ENCODE measurements at regions of chr1 and their contacts with region 1.

Region 1: GRCh38 chr1:153985941-153986761 is at the start of gene RAB13:
- DNase-seq: peak; percentile 86
- H3K4me3 Mint-ChIP-seq: peak within 1 kb of the TSS; percentile 84
- H3K27ac Mint-ChIP-seq: peak within 1 kb of the TSS; percentile 67
- H3K4me1 Mint-ChIP-seq: peaks cover 48% of the 10 kb centered on the region
- H3K27me3 Mint-ChIP-seq: peaks cover 12% of the 10 kb centered on the region
- CTCF ChIP-seq: no peak
- total RNA-seq, gene RAB13: 87.5 and 95.0 TPM in 2 replicates

Region 2: DNA sequence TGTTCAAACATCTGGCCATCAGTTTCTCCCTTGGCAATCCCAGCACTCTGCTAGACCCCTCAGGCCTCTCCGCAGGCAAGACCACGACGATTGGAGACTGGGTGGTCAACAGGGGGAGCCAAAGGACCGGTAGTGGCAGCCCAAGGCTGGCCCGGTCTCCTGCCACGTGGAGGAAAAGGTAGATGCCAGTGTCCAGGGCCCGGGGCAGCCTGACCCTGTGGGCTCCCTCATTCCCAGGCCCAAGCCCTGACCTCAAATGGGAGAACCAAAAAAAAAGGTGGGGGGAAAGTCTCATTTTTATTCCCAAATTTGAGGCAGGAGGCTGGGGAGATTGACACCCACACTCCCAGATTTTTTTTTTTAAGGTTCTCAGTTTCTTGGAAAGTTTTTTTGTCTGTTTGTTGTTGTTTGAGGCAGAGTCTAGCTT is 475.2 kb before region 1 on chr1:
- CTCF ChIA-PET with region 1: no interaction called
- intact Hi-C with region 1: loop called (anchors 10 kb)
- DNase-seq: peak; percentile 97
- H3K4me3 Mint-ChIP-seq: no peak overlapping the region
- H3K27ac Mint-ChIP-seq: peak overlapping the region; percentile 82
- H3K4me1 Mint-ChIP-seq: peaks cover 82% of the 10 kb centered on the region
- H3K27me3 Mint-ChIP-seq: no peaks in the 10 kb centered on the region
- CTCF ChIP-seq: peak; percentile 97

Region 3: DNA sequence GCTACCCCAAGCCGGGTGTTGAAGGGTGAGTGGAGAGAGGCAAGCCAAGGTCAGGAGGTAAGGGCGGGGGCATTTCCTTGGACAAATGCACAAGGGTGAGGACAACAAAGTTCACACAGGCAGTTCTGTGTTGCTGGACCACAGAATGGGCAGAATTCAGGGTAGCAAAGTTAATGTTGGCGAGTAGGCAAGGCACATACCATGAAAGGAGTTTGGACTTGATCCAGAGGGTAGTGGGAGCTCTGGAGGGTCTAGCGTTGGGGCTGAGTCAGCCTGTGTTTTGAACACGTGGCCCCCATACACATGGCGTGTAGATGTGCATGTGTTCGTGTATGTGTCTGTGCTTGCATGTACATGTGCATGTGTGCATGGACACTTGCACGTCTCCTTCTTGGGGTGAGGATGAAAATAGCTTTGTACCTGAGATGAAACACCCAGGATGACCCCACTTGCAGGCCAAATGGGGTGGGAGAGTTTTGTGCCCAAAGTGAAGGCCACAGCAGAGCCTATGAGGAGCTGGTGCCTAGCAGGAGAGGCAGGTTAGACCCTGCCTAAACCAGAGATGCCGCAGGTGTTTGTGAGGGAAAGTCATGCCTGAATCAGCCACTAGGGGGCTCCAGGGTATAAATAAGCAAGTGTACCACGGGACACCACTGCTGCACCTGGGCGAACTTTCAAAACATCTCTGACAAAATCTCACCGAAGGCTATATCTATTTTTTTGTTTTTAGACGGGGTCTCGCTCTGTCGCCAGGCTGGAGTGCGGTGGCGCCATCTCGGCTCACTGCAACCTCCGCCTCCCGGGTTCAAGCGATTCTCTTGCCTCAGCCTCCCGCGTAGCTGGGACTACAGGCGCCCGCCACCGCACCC is 189.1 kb before region 1 on chr1:
- CTCF ChIA-PET with region 1: interaction called, 4 read pairs
- intact Hi-C with region 1: loop called (anchors 1 kb)
- DNase-seq: peak; percentile 88
- H3K4me3 Mint-ChIP-seq: no peak overlapping the region
- H3K27ac Mint-ChIP-seq: no peak overlapping the region
- H3K4me1 Mint-ChIP-seq: no peaks in the 10 kb centered on the region
- H3K27me3 Mint-ChIP-seq: peaks cover 26% of the 10 kb centered on the region
- CTCF ChIP-seq: peak; percentile 96

Region 4: GRCh38 chr1:153899509-153899908 is 86.6 kb before region 1 on chr1:
- CTCF ChIA-PET with region 1: interaction called, 10 read pairs
- intact Hi-C with region 1: no loop called
- DNase-seq: no peak
- H3K4me3 Mint-ChIP-seq: no peak overlapping the region
- H3K27ac Mint-ChIP-seq: no peak overlapping the region
- H3K4me1 Mint-ChIP-seq: no peaks in the 10 kb centered on the region
- H3K27me3 Mint-ChIP-seq: no peaks in the 10 kb centered on the region
- CTCF ChIP-seq: no peak

Region 5: GRCh38 chr1:153928791-153929341 is 57.3 kb before region 1 on chr1:
- CTCF ChIA-PET with region 1: no interaction called
- intact Hi-C with region 1: no loop called
- DNase-seq: no peak
- H3K4me3 Mint-ChIP-seq: no peak overlapping the region
- H3K27ac Mint-ChIP-seq: no peak overlapping the region
- H3K4me1 Mint-ChIP-seq: no peaks in the 10 kb centered on the region
- H3K27me3 Mint-ChIP-seq: no peaks in the 10 kb centered on the region
- CTCF ChIP-seq: no peak

Region 6: DNA sequence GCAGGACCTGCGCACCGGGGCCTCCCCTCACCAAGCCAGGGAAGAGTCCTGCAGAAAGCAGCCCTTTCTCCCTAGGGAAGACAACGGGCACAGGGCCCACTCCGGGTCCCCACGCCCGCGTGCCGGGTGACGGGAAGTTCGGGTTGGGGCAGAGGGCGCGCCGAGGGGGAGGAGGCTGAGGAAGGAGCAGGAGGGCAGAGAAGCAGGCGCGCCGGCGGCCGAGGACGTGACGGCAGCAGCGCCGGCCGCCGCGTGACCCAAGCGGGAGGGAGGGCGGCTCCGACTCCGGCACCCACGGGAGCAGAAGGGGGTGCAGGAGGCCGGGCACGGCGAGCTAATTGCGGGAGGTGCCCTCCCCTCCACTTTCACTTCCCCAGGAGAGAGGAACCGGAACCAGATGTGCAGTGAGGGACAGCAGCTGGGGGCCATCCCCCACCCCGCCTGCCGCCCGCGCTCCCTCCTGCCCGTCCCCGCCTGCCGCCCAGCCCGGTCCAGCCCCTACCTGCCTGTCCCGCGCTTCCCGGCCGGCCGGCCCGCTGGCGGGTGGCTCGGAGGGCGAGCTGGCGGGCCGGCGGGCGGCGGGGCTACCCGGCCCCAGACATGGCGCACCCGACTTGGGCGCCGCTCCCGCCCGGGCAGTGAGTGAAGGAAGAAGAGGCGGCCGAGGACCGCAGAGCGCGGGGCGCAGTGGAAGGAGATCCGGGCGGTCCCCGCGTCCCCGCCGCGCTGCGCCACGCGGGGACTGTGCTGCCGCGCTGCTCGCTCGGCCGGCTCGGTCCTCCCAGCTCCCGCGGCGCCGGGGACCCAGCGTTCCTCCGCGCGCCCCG is 40.1 kb before region 1 on chr1:
- CTCF ChIA-PET with region 1: interaction called, 4 read pairs
- intact Hi-C with region 1: loop called (anchors 1 kb)
- DNase-seq: peak; percentile 68
- H3K4me3 Mint-ChIP-seq: peak overlapping the region; percentile 86
- H3K27ac Mint-ChIP-seq: peak overlapping the region; percentile 59
- H3K4me1 Mint-ChIP-seq: peaks cover 17% of the 10 kb centered on the region
- H3K27me3 Mint-ChIP-seq: no peaks in the 10 kb centered on the region
- CTCF ChIP-seq: no peak